Ascending aorta (tissue), 2 donors: ENCODE measurements at regions of chr18 and their contacts with region 1.

Region 1: DNA sequence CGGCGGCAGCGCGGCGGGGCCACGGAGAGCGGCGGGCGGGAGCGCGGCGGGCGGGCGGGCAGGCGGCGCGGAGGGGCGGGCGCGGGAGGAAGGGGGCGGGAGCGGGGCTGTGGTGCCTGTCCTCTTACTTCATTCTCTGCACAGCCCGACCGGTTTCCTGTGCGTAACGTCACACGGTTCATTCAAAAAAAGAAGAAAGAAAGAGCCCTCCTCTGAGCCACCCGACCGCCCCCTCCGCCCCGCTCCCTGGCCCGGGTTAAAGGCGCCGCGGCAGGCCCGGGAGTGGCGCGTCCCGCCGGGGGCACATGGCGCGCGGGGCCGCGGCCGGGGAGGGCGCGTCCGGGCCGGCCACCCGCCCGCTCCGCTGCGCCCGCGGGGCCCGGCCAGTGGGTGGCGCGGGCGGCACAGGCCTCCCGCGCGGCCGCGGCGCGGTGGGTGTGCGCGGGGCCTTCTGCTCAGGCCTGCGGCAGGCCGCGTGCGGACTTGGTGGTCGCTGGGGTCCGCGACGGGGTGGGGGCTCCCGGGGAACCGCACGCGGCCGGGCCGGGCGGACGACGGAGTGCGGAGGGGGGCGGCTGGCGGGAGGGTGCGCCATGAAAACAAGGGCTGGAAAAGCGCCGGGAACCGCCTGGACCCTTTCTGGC is 599 bp upstream of the BCL2 start:
- DNase-seq: peak; percentile 66 to 94
- H3K4me3 ChIP-seq: peak overlapping the region; percentile 56 to 68
- H3K27ac ChIP-seq: peak overlapping the region; percentile 87 to 95
- H3K4me1 ChIP-seq: peaks cover 3 to 6% of the 10 kb centered on the region in 2 donors
- H3K27me3 ChIP-seq: no peaks in the 10 kb centered on the region
- CTCF ChIP-seq: peak in 1 of 3 experiments; percentile 31

Region 2: DNA sequence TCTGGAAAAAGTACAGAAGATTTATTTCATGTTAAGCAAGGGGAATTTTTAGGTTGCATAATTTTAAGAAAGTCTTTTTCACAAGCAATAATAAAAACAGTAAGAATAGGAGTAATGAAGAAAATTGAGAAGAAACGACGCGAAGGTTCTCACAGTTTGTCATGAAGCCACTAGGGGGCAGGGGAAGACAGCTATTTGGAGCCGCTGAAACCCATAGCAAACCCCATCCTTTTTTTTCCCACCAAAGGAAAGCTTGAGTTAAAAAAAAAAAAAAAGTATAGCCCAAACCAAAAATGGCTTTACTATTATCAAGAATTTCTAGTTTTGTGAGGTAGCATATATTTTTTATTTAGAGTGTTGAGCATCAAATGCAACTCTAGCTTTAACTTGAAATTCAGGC is 303.9 kb before region 1 on chr18:
- intact Hi-C with region 1: loop called (anchors 1 kb)
- DNase-seq: no peak
- H3K4me3 ChIP-seq: no peak overlapping the region
- H3K27ac ChIP-seq: no peak overlapping the region
- H3K4me1 ChIP-seq: no peaks in the 10 kb centered on the region
- H3K27me3 ChIP-seq: no peaks in the 10 kb centered on the region
- CTCF ChIP-seq: peak; percentile 74 to 79 (median 79)

Region 3: GRCh38 chr18:63148449-63149301 is 171.5 kb before region 1 on chr18:
- intact Hi-C with region 1: loop called (anchors 5 kb)
- DNase-seq: peak in 1 of 2 donors; percentile 79
- H3K4me3 ChIP-seq: no peak overlapping the region
- H3K27ac ChIP-seq: peak overlapping the region; percentile 7 to 75
- H3K4me1 ChIP-seq: peaks cover 3 to 50% of the 10 kb centered on the region in 2 donors
- H3K27me3 ChIP-seq: no peaks in the 10 kb centered on the region
- CTCF ChIP-seq: no peak

Region 4: DNA sequence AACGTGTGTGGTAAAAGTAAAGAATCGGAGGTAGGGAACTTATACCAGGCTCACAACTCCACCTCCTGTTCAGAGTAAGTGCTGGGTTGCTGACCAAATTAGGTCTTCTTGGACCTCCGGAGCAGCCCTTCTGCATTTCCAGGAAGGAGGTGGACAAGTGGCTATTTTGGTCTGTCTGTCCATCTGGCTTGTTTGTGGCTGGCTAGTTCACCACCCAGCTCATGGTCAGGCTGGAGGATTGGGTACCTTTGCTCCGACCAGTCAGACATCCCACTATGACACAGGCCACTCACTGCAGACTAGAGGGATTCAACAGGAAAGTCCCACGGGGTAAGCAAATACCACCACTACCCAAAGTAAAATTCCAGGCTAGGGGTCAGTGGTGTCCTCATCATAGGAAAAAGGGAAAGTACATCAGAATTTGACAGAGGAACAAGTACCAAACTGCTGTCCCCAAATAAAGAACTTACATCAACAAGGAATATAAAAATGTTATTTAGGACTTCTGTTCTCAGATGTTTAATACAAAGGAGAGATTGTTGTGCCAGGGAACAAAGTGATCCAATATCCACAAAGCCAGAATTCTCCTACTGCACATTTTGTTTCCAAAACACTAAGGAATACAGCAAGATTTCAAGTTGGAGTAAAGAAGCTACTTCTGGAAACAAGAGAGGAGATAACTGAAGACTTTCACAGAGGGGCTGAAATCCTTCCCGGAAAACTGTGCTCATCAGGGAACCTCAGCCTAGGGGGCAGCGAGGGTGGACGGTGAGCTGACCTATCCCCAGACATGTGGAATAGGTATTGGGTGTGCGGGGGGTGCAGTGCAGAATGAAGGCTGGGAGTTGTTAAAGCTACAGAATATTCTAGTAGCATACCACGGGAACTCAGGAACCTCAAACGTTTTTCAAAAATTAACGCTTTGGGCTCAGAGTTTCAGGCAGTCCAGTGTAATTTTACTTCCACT is 57.5 kb before region 1 on chr18:
- intact Hi-C with region 1: loop called (anchors 1 kb)
- DNase-seq: peak; percentile 65 to 91
- H3K4me3 ChIP-seq: peak overlapping the region; percentile 7 to 31
- H3K27ac ChIP-seq: peak overlapping the region; percentile 85 to 94
- H3K4me1 ChIP-seq: peaks cover 0 to 20% of the 10 kb centered on the region in 2 donors
- H3K27me3 ChIP-seq: no peaks in the 10 kb centered on the region
- CTCF ChIP-seq: peak; percentile 28 to 45 (median 33)

Region 5: DNA sequence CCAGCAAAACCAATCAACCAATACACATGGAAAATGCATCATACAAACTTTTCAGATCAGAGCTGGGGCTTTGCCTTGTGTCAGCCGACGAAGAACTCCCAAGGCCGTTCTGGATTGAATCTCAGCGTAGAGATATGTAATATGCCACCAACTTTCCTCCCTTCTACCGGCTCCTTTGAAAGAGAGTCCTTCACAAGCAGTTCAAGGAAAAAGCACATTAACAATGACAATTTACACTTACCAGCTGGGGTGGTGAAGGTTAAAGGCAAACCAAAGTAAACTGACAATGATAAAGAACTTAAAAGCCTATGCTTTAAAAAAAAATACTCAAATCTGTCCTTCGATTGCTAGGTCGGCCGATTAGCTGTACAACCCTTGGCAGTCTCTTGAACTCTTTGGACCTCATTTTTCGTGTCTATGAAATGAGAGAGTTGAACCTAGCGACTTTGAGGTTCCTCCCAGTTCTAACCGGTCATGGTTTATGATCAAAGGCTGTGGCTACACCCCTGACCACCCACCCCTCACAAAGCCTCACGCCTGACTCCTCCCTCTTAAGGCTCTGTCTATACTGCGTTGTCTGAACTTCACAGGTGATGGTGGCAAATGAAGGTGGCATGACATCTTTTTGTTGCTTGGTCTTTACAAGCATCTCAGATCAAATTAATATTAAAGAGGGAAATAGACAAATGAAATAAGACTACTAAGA is 46.8 kb before region 1 on chr18:
- intact Hi-C with region 1: no loop called
- DNase-seq: no peak
- H3K4me3 ChIP-seq: no peak overlapping the region
- H3K27ac ChIP-seq: no peak overlapping the region
- H3K4me1 ChIP-seq: no peaks in the 10 kb centered on the region
- H3K27me3 ChIP-seq: no peaks in the 10 kb centered on the region
- CTCF ChIP-seq: no peak

Region 6: DNA sequence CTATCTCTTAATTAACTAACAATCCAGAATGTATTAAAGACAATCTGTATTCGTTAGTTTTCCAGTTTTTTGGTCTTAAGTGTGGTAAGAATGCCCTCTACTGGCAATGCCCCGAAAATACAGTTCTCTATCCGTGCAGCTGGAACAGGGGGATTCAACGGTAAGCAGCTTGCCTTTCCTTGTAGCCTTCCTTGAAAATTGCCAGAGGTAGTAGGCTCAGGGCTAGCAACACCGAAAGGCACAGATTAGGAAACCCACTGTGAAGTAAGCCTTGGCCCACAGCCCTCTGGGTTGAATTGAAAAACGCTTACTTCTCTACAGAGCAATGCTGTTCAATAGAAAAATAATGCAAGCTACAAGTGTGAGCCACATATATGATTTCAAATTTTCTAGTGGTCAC is 119.2 kb after region 1 on chr18:
- intact Hi-C with region 1: loop called (anchors 2 kb)
- DNase-seq: peak in 1 of 2 donors; percentile 74
- H3K4me3 ChIP-seq: no peak overlapping the region
- H3K27ac ChIP-seq: no peak overlapping the region
- H3K4me1 ChIP-seq: peaks cover 0 to 12% of the 10 kb centered on the region in 2 donors
- H3K27me3 ChIP-seq: no peaks in the 10 kb centered on the region
- CTCF ChIP-seq: peak; percentile 56 to 79 (median 63)